B cell (primary cell): ENCODE measurements at regions of chr4 and their contacts with region 1.

Region 1: DNA sequence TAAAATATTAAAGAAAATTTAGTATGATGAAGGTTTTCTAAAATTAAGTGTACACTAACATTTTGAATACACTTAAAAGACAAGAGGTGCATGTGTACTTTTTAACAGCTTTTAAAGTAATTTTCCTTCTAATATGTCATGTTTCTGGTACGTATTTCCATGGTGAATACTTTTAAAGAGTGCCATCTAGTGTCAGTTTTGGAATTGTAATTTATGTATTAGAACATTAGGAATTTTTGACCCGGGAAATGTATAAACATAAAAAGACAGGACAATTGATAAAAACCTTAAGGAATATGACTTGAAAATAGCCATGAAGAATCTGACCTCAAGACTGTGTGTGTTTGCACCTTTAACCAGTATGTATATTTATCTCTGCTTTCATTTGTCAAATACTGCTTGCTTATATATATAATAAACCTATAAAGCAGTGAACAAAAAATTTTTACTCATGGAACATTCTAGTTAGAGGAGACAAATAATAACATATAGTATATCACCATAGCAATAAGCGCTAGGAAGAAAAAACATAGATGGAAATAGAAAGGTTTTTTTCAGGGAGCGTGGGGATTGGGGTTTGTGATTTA is 7.2 kb downstream of the GSTCD start:
- DNase-seq: peak; percentile 60
- ATAC-seq: no peak
- H3K4me3 ChIP-seq: no peak overlapping the region
- H3K4me3 Mint-ChIP-seq: no peak overlapping the region
- H3K27ac ChIP-seq: no peak overlapping the region
- H3K27ac Mint-ChIP-seq: no peak overlapping the region
- H3K4me1 ChIP-seq: peaks cover 8 to 11% of the 10 kb centered on the region in 2 donors
- H3K4me1 Mint-ChIP-seq: peaks cover 19% of the 10 kb centered on the region
- H3K27me3 ChIP-seq: no peaks in the 10 kb centered on the region
- H3K27me3 Mint-ChIP-seq: no peaks in the 10 kb centered on the region
- CTCF ChIP-seq: peak; percentile 77

Region 2: GRCh38 chr4:104930298-104930697 is 785.5 kb before region 1 on chr4:
- CTCF ChIA-PET with region 1: interaction called, 3 read pairs
- POLR2A ChIA-PET with region 1: no interaction called
- intact Hi-C with region 1: loop called (anchors 2 kb)
- DNase-seq: peak; percentile 5
- ATAC-seq: no peak
- H3K4me3 ChIP-seq: peak overlapping the region in 1 of 5 experiments; percentile 6
- H3K4me3 Mint-ChIP-seq: peak overlapping the region; percentile 37
- H3K27ac ChIP-seq: no peak overlapping the region
- H3K27ac Mint-ChIP-seq: peak overlapping the region; percentile 69
- H3K4me1 ChIP-seq: peaks cover 13 to 20% of the 10 kb centered on the region in 2 donors
- H3K4me1 Mint-ChIP-seq: peaks cover 23% of the 10 kb centered on the region
- H3K27me3 ChIP-seq: no peaks in the 10 kb centered on the region
- H3K27me3 Mint-ChIP-seq: no peaks in the 10 kb centered on the region
- CTCF ChIP-seq: no peak

Region 3: DNA sequence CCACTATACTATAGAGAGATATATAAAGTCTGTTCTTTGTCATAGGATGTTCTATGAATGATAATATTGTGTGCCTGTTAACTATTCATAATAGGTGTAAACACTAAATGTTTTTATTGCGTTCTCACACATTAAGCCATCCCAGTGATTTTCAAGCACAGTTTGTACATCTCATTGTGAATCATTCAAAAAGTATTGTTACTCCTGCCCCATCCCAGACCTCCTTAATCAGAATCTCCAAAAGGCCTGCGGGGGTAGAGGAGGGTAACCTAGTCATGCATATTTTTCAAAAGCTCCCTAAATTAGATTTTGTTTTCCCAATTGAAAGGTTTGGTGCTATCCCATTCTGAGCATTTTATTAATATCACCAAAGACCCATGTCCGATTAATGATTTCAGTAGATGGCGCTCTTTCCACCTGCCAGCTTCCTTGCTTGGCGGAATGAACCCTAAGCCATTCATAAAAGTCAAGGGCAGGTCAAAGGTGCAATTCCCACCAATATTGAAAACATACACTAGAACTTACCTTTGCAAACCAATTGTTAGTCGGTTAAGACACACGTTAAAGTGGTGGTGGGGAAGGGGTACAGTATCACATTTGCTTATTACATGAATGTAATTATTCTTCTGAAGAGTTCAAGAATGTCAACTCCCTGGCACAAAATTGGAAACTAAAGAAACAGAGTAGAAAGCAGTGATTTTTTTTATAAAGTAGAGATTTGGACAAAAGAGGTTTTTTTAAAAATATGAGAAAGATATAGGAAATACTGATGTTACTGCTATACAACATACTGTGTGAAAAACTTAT is 574.9 kb before region 1 on chr4:
- CTCF ChIA-PET with region 1: interaction called, 11 read pairs
- POLR2A ChIA-PET with region 1: no interaction called
- intact Hi-C with region 1: loop called (anchors 1 kb)
- DNase-seq: peak; percentile 75
- ATAC-seq: peak; percentile 55
- H3K4me3 ChIP-seq: no peak overlapping the region
- H3K4me3 Mint-ChIP-seq: no peak overlapping the region
- H3K27ac ChIP-seq: no peak overlapping the region
- H3K27ac Mint-ChIP-seq: no peak overlapping the region
- H3K4me1 ChIP-seq: peaks cover 6% of the 10 kb centered on the region in 2 donors
- H3K4me1 Mint-ChIP-seq: peaks cover 10% of the 10 kb centered on the region
- H3K27me3 ChIP-seq: no peaks in the 10 kb centered on the region
- H3K27me3 Mint-ChIP-seq: no peaks in the 10 kb centered on the region
- CTCF ChIP-seq: peak; percentile 79

Region 4: DNA sequence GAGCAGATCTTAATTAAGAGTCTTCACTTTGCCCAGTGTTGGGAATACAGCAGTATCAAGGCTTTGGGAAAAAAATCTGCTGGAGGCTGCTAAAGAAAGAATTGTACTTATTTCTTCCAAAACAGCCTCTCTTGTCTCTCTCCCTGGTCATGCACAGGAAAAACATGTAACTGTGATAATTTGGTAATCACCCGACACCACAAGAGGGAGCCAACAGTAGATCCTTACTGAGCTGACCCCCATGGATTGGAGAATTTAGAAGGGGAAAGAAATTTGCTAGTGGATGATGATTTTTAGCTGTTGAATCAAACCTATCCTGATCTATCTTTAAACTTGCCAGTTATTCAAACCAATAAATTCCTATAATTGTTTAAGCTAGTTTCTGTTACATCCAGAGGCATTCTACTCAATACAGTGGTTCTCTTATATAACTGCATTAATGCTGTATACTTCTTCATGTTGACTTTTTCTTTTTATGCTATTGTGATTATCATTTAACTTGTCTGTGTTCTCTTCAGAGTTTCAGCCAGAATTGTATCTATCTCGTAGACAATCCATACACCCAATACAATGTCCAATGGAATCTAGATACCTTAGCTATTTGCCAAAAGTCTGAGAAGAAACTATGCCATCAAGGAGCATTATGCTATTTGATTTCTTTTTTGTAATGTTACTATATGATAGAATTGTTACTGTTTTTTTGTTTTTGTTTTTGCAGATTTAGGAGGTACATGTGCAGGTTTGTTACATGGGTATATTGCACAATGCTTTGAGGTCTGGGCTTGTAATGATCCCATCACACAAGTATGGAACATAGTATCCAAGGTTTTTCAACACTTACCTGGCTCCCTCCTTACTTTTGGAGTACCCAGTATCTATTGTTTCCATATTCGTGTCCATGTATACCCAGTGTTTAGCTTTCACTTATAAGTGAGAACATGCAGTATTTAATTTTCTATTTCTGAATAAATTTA is 194.7 kb before region 1 on chr4:
- CTCF ChIA-PET with region 1: interaction called, 39 read pairs
- POLR2A ChIA-PET with region 1: interaction called, 5 read pairs
- intact Hi-C with region 1: loop called (anchors 1 kb)
- DNase-seq: peak; percentile 40
- ATAC-seq: no peak
- H3K4me3 ChIP-seq: no peak overlapping the region
- H3K4me3 Mint-ChIP-seq: no peak overlapping the region
- H3K27ac ChIP-seq: no peak overlapping the region
- H3K27ac Mint-ChIP-seq: no peak overlapping the region
- H3K4me1 ChIP-seq: no peaks in the 10 kb centered on the region
- H3K4me1 Mint-ChIP-seq: no peaks in the 10 kb centered on the region
- H3K27me3 ChIP-seq: peaks cover 0 to 4% (median under 1%) of the 10 kb centered on the region in 4 experiments
- H3K27me3 Mint-ChIP-seq: peaks cover 3% of the 10 kb centered on the region
- CTCF ChIP-seq: peak; percentile 68